ENCODE measurements at regions of chr19 and their contacts with region 1.

Region 1: DNA sequence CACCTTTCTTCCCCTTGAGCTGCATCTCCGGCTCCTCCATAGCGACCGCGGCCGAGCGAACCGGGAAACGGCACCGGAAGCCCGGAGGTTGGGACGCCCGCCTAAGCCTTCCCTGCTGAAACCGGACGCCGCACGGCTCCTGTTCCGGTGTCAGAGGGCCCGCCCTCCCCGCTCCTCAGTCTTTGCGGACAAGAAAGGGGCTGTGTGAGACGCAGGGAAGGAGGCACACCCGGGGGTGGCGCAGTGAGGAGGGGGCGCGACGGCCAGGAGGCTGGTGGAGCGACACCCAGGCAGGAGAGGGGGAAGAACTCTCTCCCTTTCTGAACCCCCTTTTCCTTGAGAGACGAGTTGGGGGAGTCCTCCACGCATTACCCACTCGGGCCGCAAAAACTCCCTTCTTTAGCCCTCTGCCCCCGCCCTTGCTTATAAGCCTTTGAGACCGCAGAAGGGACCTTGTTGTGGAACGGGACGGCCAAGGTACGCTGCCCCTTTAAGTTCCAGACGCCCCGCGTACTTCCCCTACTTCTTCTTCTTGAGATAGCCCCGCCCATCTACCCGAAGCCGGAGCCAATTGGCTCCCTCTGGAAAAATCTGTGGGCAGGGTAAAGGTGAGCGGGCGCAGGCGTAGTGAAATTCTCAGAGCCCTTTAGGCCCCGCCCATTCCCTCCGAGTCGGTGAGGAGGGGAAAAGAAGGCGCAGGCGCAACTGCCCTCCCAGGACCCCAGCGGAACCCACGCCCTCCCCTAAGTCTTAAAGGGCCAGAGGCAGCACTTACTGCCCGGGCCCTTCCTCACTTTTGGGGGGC is at the starts of genes BORCS8 and RFXANK:
- DNase-seq: peak; percentile 100
- ATAC-seq: peak; percentile 93
- H3K4me3 Mint-ChIP-seq: peak within 1 kb of the TSS; percentile 93
- H3K27ac Mint-ChIP-seq: peak within 1 kb of the TSS; percentile 97
- H3K4me1 Mint-ChIP-seq: peaks cover 31% of the 10 kb centered on the region
- H3K27me3 Mint-ChIP-seq: no peaks in the 10 kb centered on the region
- CTCF ChIP-seq: no peak
- total RNA-seq, gene BORCS8: 20.8 to 22.2 TPM
- total RNA-seq, gene RFXANK: 61.4 to 68.5 TPM

Region 2: DNA sequence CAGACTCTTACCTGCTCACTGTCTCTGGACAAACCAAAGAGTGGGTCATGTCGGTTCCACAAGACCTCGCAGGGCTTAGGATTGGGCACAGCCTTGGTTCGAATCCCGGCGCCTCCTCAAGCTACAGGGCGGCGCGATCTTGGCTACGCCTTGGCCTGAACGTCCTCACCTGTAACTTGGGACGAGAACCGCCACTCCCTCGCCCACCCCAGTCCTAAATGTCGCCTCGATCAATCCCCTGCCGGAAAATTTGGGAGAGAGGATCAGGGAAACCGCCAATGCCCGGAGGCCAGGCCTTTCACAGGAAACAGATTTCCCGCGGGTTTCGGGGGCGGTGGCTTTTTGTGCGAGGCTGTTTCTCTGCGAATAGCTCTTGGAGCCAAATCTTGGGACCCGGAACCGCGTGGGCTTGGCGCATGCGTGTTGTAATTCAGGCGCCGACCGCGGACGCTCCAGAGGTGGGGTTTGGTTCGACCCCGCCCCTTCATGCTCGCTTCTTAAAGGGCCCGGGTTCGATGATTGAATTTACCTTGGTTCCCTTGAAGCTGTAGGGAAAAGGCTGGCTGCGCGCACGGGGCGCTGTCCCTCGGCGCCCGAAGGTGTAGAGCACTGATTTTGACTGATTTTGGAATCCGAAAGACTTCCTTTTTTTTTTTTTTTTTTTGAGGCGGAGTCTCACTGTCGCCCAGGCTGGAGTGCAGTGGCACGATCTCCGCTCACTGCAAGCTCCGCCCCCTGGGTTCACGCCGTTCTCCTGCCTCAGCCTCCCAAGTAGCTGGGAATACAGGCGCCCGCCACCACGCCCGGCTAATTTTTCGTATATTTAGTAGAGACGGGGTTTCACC is 11.0 kb after region 1 on chr19 and contains the start of gene NR2C2AP:
- CTCF ChIA-PET with region 1: interaction called, 4 read pairs
- POLR2A ChIA-PET with region 1: interaction called, 40 read pairs
- intact Hi-C with region 1: no loop called
- DNase-seq: peak; percentile 97
- ATAC-seq: peak; percentile 92
- H3K4me3 Mint-ChIP-seq: peak within 1 kb of the TSS; percentile 94
- H3K27ac Mint-ChIP-seq: peak within 1 kb of the TSS; percentile 91
- H3K4me1 Mint-ChIP-seq: peaks cover 23% of the 10 kb centered on the region
- H3K27me3 Mint-ChIP-seq: no peaks in the 10 kb centered on the region
- CTCF ChIP-seq: no peak
- total RNA-seq, gene NR2C2AP: 37.8 to 40.0 TPM

Region 3: DNA sequence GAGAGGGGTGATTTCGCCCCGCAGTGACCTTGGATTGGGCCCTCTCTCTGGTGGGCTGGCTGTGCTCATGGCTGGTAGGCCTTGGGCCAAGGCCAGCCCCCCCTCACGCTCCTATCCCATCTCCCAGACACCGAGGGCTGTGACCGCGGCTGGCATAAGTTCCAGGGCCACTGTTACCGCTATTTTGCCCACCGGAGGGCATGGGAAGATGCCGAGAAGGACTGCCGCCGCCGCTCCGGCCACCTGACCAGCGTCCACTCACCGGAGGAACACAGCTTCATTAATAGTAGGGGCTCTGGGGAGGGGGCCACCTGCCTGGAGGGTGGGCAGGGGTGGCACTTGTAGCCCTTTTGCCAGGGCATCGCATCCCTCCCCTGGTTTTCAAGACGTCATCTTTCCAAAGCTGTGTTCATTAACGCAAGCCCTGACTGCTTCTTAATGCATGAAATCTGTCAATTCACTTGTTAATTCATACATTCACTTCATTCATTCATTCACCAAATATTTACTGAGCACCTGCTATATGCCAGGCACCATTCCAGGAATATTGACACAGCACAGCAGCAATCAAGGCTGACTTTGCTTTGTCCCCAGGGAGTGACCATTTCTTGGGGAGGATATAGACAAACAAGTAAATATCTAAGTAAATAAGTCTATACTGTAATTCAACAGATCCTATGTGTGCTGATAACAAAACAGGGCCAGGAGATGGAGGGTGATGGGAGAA is 46.0 kb after region 1 on chr19:
- CTCF ChIA-PET with region 1: no interaction called
- POLR2A ChIA-PET with region 1: no interaction called
- intact Hi-C with region 1: no loop called
- DNase-seq: no peak
- ATAC-seq: no peak
- H3K4me3 Mint-ChIP-seq: no peak overlapping the region
- H3K27ac Mint-ChIP-seq: no peak overlapping the region
- H3K4me1 Mint-ChIP-seq: no peaks in the 10 kb centered on the region
- H3K27me3 Mint-ChIP-seq: peaks cover 14% of the 10 kb centered on the region
- CTCF ChIP-seq: no peak